Caco-2 (cell line): ENCODE measurements at regions of chr19 and their contacts with region 1.

Region 1: GRCh38 chr19:41883821-41884733 is 1.1 kb downstream of the ARHGEF1 start:
- DNase-seq: peak; percentile 98
- H3K4me3 ChIP-seq: peak overlapping the region; percentile 89
- H3K4me3 Mint-ChIP-seq: peak overlapping the region; percentile 91
- H3K27ac Mint-ChIP-seq: peak overlapping the region; percentile 83
- H3K4me1 ChIP-seq: peaks cover 24% of the 10 kb centered on the region
- H3K4me1 Mint-ChIP-seq: peaks cover 31% of the 10 kb centered on the region
- H3K27me3 ChIP-seq: no peaks in the 10 kb centered on the region
- H3K27me3 Mint-ChIP-seq: peaks cover 3% of the 10 kb centered on the region
- CTCF ChIP-seq: no peak

Region 2: GRCh38 chr19:41872775-41873647 is 11.1 kb before region 1 on chr19:
- CTCF ChIA-PET with region 1: interaction called, 17 read pairs
- POLR2A ChIA-PET with region 1: interaction called, 13 read pairs
- intact Hi-C with region 1: loop called (anchors 2 kb)
- DNase-seq: peak; percentile 92 to 93
- H3K4me3 ChIP-seq: no peak overlapping the region
- H3K4me3 Mint-ChIP-seq: no peak overlapping the region
- H3K27ac Mint-ChIP-seq: peak overlapping the region; percentile 88
- H3K4me1 ChIP-seq: peaks cover 18% of the 10 kb centered on the region
- H3K4me1 Mint-ChIP-seq: peaks cover 9% of the 10 kb centered on the region
- H3K27me3 ChIP-seq: no peaks in the 10 kb centered on the region
- H3K27me3 Mint-ChIP-seq: no peaks in the 10 kb centered on the region
- CTCF ChIP-seq: peak; percentile 80 to 95

Region 3: GRCh38 chr19:41895745-41896580 is 11.9 kb after region 1 on chr19:
- CTCF ChIA-PET with region 1: no interaction called
- POLR2A ChIA-PET with region 1: no interaction called
- intact Hi-C with region 1: no loop called
- DNase-seq: no peak
- H3K4me3 ChIP-seq: no peak overlapping the region
- H3K4me3 Mint-ChIP-seq: no peak overlapping the region
- H3K27ac Mint-ChIP-seq: no peak overlapping the region
- H3K4me1 ChIP-seq: peaks cover 5% of the 10 kb centered on the region; the same call in 1 of the 2 replicates
- H3K4me1 Mint-ChIP-seq: peaks cover 7% of the 10 kb centered on the region
- H3K27me3 ChIP-seq: no peaks in the 10 kb centered on the region
- H3K27me3 Mint-ChIP-seq: no peaks in the 10 kb centered on the region
- CTCF ChIP-seq: peak; percentile 43 to 62

Region 4: DNA sequence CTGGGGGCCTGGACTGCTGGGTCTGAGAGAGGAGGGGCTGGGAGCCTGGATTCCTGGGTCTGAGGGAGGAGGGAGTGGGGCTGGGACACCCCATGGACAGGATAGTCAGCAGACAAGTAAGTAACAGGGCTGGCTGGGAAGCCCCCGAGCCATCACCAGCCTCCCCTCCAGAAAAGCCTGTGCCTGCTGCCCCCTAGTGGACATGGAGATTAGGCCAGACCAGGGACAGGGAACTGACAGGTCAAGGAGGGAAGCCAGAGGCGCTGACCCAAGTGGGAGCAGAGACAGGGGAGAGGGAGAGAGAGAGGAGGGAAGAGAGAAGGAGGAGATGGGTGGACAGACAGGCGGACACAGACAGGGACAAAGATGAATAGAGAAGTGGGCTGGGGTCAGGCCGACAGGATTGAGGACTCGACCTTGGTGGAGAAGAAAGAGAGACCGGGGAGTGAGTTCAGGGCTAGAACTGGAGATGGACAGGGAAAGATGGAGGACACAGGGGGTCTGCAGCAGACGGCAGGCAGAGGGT is 50.8 kb after region 1 on chr19:
- CTCF ChIA-PET with region 1: interaction called, 6 read pairs
- POLR2A ChIA-PET with region 1: no interaction called
- intact Hi-C with region 1: loop called (anchors 2 kb)
- DNase-seq: peak; percentile 87 to 90
- H3K4me3 ChIP-seq: no peak overlapping the region
- H3K4me3 Mint-ChIP-seq: no peak overlapping the region
- H3K27ac Mint-ChIP-seq: no peak overlapping the region
- H3K4me1 ChIP-seq: peaks cover 16% of the 10 kb centered on the region
- H3K4me1 Mint-ChIP-seq: peaks cover 23% of the 10 kb centered on the region
- H3K27me3 ChIP-seq: no peaks in the 10 kb centered on the region
- H3K27me3 Mint-ChIP-seq: peaks cover 10% of the 10 kb centered on the region
- CTCF ChIP-seq: peak; percentile 88 to 93

Region 5: GRCh38 chr19:41959056-41960053 is 75.3 kb after region 1 on chr19 and contains the start of gene RABAC1:
- CTCF ChIA-PET with region 1: interaction called, 9 read pairs
- POLR2A ChIA-PET with region 1: no interaction called
- intact Hi-C with region 1: loop called (anchors 1 kb)
- DNase-seq: peak; percentile 93 to 95
- H3K4me3 ChIP-seq: peak within 1 kb of the TSS; percentile 82
- H3K4me3 Mint-ChIP-seq: peak within 1 kb of the TSS; percentile 78
- H3K27ac Mint-ChIP-seq: peak within 1 kb of the TSS; percentile 81
- H3K4me1 ChIP-seq: peaks cover 14% of the 10 kb centered on the region
- H3K4me1 Mint-ChIP-seq: peaks cover 13% of the 10 kb centered on the region
- H3K27me3 ChIP-seq: no peaks in the 10 kb centered on the region
- H3K27me3 Mint-ChIP-seq: no peaks in the 10 kb centered on the region
- CTCF ChIP-seq: peak in 1 of 2 experiments; percentile 44
- total RNA-seq, gene RABAC1: 64.4 and 70.7 TPM in 2 replicates